ENCODE measurements at regions of chr1 and their contacts with region 1.

Region 1: GRCh38 chr1:173867753-173868265 is at the start of gene GAS5:
- DNase-seq: peak; percentile 99
- H3K4me3 ChIP-seq: peak within 1 kb of the TSS; percentile 88
- CTCF ChIP-seq: no peak

Region 2: DNA sequence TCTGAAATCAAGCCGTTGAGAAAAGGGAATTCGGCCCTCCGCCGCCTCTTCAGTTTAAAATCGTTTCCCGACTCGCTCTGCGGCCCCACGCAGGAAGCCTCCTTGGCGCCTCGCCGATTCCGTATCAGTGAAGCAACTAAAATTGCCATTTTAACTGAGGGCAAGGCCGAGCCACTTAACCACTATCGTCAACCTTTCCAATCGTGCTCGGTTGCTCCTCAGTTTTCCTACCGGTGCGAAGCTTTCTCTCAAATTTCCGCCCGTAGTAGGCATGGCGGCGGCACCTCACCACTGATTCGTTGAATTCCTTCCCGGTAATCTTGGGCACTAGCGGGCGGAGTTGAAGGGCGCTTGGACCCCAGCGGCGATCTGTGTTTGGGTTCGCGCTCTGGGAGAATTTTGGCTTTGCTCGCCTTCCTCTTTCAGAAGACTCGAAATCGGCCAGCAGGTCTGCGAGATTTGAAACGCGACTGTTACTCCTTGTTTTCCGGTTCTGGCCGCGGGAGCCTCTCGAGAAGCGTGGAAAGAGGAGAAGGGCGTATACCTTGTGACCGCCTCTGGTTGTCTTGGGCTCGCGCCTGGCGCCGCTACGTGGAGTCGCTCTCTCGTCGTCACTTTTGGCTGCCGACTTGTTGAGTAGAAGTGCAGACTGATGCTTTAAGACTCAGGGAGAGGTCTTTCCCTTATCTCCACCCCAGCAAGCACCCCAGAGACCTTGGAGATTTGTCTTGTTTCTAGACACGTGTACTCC is 43.3 kb before region 1 on chr1 and contains the starts of genes CENPL and DARS2:
- CTCF ChIA-PET with region 1: no interaction called
- POLR2A ChIA-PET with region 1: interaction called, 12 read pairs
- DNase-seq: peak; percentile 90
- H3K4me3 ChIP-seq: peak within 1 kb of the TSS; percentile 97
- CTCF ChIP-seq: no peak

Region 3: GRCh38 chr1:173856903-173857302 is 10.9 kb before region 1 on chr1:
- CTCF ChIA-PET with region 1: interaction called, 3 read pairs
- POLR2A ChIA-PET with region 1: interaction called, 13 read pairs
- DNase-seq: no peak
- H3K4me3 ChIP-seq: no peak overlapping the region
- CTCF ChIP-seq: no peak

Region 4: DNA sequence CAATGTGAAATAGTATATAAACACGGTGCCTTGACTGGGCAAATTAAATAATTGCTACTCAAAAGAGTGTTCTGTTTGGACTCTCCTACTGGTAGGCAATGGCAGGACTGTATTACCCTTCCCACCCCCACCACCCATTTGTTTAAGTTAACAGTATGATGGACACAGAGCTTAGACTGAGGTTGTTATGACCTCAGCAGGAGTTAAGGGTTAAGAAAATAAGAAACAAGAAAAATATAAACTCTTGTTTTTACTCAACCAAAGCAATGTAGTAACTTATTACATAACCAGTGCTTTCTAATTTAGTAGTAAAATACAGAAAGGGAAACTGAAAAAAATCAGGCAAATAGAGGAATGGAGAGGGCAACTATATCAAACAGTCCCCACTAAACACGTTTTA is 69.3 kb after region 1 on chr1:
- CTCF ChIA-PET with region 1: no interaction called
- POLR2A ChIA-PET with region 1: no interaction called
- DNase-seq: no peak
- H3K4me3 ChIP-seq: no peak overlapping the region
- CTCF ChIP-seq: no peak